Naive thymus-derived CD4-positive, alpha-beta T cell (primary cell): ENCODE measurements at regions of chr1 and their contacts with region 1.

Region 1: DNA sequence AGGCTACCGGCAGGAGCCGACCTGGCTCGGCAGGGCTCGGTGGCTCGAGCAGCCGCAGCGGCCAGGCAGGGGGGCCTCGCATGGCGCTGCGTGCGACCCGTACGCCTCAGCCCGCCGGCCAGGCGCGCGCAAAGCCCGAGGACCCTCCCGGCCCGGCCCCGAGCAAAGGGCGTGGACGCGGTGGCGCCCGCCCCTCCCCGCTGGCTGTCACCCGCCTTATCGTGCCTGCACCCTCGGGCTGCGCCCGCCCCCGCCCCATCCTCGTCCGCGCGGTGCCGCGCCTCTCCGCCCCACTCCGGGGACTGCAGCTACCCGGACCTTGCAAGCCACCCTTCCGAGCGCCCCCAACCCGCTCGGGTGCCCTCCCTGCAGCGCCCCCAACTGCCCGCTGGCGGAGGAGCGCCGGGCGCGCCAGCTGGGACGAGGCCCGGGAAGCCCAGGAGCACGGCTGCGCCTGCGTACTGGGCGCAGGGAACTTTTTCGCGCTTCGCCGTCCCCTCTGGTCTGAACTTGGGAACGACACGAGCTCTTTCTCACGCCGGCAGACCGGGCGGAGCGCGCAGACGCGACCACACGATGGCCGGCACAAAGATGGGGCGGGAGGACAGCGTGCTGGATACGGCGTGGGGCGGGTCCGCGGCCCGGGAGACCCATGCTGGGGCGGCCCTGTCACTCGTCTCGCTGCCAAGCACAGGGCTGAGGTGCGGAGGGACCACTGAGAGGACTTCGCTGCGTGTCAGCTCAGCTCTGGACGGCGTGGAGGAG is at the start of gene ABCB10:
- DNase-seq: peak; percentile 68 to 96 (median 80)
- ATAC-seq: peak; percentile 85
- H3K4me3 ChIP-seq: peak within 1 kb of the TSS; percentile 88
- H3K4me3 Mint-ChIP-seq: peak within 1 kb of the TSS; percentile 91 to 97 (median 95)
- H3K27ac ChIP-seq: peak within 1 kb of the TSS; percentile 65
- H3K27ac Mint-ChIP-seq: peak within 1 kb of the TSS; percentile 64 to 92 (median 87)
- H3K4me1 ChIP-seq: peaks cover 15 to 16% of the 10 kb centered on the region in 2 donors
- H3K4me1 Mint-ChIP-seq: peaks cover 37 to 46% (median 41%) of the 10 kb centered on the region in 7 donors
- H3K27me3 ChIP-seq: no peaks in the 10 kb centered on the region
- H3K27me3 Mint-ChIP-seq: peaks cover 0 to 6% (median 0%) of the 10 kb centered on the region in 5 donors
- total RNA-seq, gene ABCB10: 14.1 to 31.9 (median 18.4) TPM

Region 2: GRCh38 chr1:229625915-229626831 is 67.4 kb after region 1 on chr1 and contains the starts of genes TAF5L and URB2:
- CTCF ChIA-PET with region 1: interaction called, 5 read pairs
- POLR2A ChIA-PET with region 1: interaction called, 49 read pairs
- intact Hi-C with region 1: loop called (anchors 1 kb)
- DNase-seq: peak; percentile 81 to 91 (median 85)
- ATAC-seq: peak; percentile 97
- H3K4me3 ChIP-seq: peak within 1 kb of the TSS; percentile 93
- H3K4me3 Mint-ChIP-seq: peak within 1 kb of the TSS; percentile 94 to 100 (median 98)
- H3K27ac ChIP-seq: peak within 1 kb of the TSS; percentile 80
- H3K27ac Mint-ChIP-seq: peak within 1 kb of the TSS; percentile 93 to 98 (median 97)
- H3K4me1 ChIP-seq: peaks cover 21 to 27% of the 10 kb centered on the region in 2 donors
- H3K4me1 Mint-ChIP-seq: peaks cover 39 to 69% (median 59%) of the 10 kb centered on the region in 7 donors
- H3K27me3 ChIP-seq: no peaks in the 10 kb centered on the region
- H3K27me3 Mint-ChIP-seq: no peaks in the 10 kb centered on the region
- total RNA-seq, gene TAF5L: 17.3 to 27.2 (median 19.8) TPM
- total RNA-seq, gene URB2: 6.2 to 18.2 (median 11.0) TPM

Region 3: GRCh38 chr1:229781453-229781852 is 222.7 kb after region 1 on chr1:
- CTCF ChIA-PET with region 1: no interaction called
- POLR2A ChIA-PET with region 1: no interaction called
- intact Hi-C with region 1: no loop called
- DNase-seq: no peak
- ATAC-seq: no peak
- H3K4me3 ChIP-seq: no peak overlapping the region
- H3K4me3 Mint-ChIP-seq: no peak overlapping the region
- H3K27ac ChIP-seq: no peak overlapping the region
- H3K27ac Mint-ChIP-seq: no peak overlapping the region
- H3K4me1 ChIP-seq: no peaks in the 10 kb centered on the region
- H3K4me1 Mint-ChIP-seq: no peaks in the 10 kb centered on the region
- H3K27me3 ChIP-seq: no peaks in the 10 kb centered on the region
- H3K27me3 Mint-ChIP-seq: peaks cover 0 to 19% (median 4%) of the 10 kb centered on the region in 5 donors

Region 4: DNA sequence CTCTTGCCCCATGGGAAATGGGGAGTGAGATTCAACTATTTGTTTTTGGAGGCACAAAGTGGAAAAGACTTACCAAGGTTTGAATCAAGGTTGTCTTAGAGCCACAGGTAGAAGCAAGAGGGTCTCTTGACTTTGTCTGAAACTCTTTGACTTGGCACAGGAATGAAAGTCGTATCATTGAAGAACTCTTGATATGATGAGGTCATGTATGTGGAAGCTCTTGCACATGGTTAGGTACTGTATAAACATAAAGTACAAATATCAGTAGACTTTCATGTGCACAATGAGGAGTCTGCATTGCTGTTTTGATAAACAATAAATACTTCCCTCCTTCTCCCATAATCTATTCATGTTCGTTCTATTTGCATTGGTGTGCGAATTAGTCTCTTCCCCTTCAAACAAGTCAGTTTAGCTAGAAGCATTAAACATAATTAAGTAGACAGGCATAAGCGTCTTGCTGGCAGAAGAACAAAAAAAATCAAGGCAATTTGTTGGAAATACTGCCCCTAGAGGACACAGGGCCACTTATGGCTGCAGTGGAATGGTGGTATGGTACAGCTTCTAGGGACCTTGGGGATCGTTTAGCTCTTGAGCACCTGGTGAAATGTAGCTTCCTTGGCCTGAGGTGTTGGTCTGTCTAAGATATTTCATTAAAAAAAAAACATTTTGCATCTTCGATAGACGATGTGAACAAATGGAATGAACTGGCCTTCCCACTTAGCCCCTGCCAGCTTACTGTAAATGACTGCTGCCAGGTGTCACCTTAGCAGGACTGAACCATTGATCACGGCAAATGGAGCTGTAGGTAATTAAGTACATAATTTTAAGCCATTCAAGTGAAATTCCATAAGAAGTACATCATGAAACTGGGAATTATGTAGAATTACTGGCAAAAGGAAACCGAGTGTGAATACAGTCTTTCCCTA is 290.3 kb after region 1 on chr1:
- CTCF ChIA-PET with region 1: no interaction called
- POLR2A ChIA-PET with region 1: no interaction called
- intact Hi-C with region 1: no loop called
- DNase-seq: peak in 2 of 9 donors; percentile 3 to 26
- ATAC-seq: no peak
- H3K4me3 ChIP-seq: no peak overlapping the region
- H3K4me3 Mint-ChIP-seq: no peak overlapping the region
- H3K27ac ChIP-seq: no peak overlapping the region
- H3K27ac Mint-ChIP-seq: no peak overlapping the region
- H3K4me1 ChIP-seq: no peaks in the 10 kb centered on the region
- H3K4me1 Mint-ChIP-seq: no peaks in the 10 kb centered on the region
- H3K27me3 ChIP-seq: no peaks in the 10 kb centered on the region
- H3K27me3 Mint-ChIP-seq: peaks cover 7 to 20% (median 13%) of the 10 kb centered on the region in 5 donors

Region 5: DNA sequence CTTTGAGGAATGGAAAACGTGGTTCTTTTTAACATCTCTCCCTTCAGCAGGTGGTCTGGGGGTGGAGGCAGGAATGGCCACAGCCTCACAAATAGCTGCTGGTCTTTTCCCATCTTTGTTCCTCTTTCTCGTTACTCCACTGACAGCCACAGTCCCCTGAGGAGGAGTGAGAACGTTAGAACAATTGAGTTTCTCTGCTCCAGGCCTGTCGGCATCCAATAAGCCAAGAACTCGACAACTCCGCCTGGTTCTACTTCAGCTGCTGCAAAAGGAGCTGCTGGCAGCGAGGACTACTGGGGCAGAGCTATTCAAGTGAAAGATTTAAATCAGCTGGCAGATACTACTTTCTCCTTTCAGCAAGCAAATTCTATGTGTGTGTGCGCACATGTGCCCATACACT is 338.7 kb after region 1 on chr1:
- CTCF ChIA-PET with region 1: no interaction called
- POLR2A ChIA-PET with region 1: no interaction called
- intact Hi-C with region 1: no loop called
- DNase-seq: no peak
- ATAC-seq: no peak
- H3K4me3 ChIP-seq: no peak overlapping the region
- H3K4me3 Mint-ChIP-seq: no peak overlapping the region
- H3K27ac ChIP-seq: no peak overlapping the region
- H3K27ac Mint-ChIP-seq: no peak overlapping the region
- H3K4me1 ChIP-seq: no peaks in the 10 kb centered on the region
- H3K4me1 Mint-ChIP-seq: no peaks in the 10 kb centered on the region
- H3K27me3 ChIP-seq: no peaks in the 10 kb centered on the region
- H3K27me3 Mint-ChIP-seq: peaks cover 33 to 67% (median 57%) of the 10 kb centered on the region in 5 donors

Region 6: DNA sequence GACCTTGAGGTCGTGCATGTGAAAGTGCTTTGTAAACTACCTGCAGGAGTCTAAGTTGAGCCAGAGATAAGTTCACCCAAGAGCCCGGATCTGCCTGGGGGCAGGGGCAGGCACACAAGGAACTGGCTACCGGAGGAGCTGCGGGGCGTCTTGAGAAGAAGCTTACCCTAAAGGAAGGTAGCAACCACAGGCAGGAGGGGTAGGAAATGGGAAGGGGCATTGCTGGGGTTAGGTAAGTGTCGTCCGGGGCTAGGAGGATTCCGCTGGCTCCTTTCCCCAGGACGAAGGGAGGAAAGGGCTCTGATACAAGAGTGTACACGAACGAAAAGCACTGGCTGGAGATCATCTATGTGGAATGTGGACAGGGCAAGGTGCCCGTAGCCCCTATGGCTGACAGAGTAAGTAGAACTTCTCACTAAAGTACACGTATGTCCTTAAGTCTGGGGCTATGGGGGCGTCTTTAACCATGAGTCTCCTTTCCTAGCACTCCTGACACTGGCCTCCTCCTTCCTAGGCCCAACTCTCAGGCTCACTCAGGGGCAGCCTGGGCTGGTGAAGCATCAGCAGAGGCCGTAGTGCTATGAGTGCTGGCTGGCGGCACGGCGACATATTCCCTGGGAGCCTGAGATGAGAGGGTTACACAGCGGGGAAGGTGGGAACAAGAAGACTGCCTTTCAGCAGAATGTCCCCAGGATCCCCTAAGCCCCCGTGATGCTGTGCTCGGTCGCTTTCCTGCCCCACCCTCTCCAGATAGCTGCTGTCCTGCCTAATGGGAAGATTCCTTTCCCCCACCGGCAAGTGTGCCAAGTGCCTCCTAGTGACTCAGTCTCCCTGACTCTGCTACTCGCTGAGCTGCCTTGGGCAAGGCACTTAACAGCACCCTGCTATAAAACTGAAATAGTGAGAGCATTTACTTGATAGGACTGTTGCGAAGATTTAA is 499.2 kb after region 1 on chr1:
- CTCF ChIA-PET with region 1: no interaction called
- POLR2A ChIA-PET with region 1: no interaction called
- intact Hi-C with region 1: no loop called
- DNase-seq: no peak
- ATAC-seq: no peak
- H3K4me3 ChIP-seq: no peak overlapping the region
- H3K4me3 Mint-ChIP-seq: no peak overlapping the region
- H3K27ac ChIP-seq: no peak overlapping the region
- H3K27ac Mint-ChIP-seq: no peak overlapping the region
- H3K4me1 ChIP-seq: no peaks in the 10 kb centered on the region
- H3K4me1 Mint-ChIP-seq: no peaks in the 10 kb centered on the region
- H3K27me3 ChIP-seq: peaks cover 0 to 3% of the 10 kb centered on the region in 2 donors
- H3K27me3 Mint-ChIP-seq: peaks cover 0 to 51% (median 5%) of the 10 kb centered on the region in 5 donors